Activated CD4-positive, alpha-beta T cell treated with anti-CD3 and anti-CD28 coated beads, Interleukin-2, amount 10 ng/mL, durations not matched to agents 24 days and 14 days (primary cell): ENCODE measurements at regions of chr7 and their contacts with region 1.

Region 1: GRCh38 chr7:18859318-18859717 is 258.1 kb downstream of the TWIST1 start:
- DNase-seq: peak; percentile 69
- H3K4me3 Mint-ChIP-seq: peak overlapping the region; percentile 9
- H3K27ac Mint-ChIP-seq: peak overlapping the region; percentile 86
- H3K4me1 Mint-ChIP-seq: peaks cover 20% of the 10 kb centered on the region
- H3K27me3 Mint-ChIP-seq: no peaks in the 10 kb centered on the region

Region 2: GRCh38 chr7:18844735-18845134 is 14.6 kb before region 1 on chr7:
- intact Hi-C with region 1: loop called (anchors 2 kb)
- DNase-seq: no peak
- H3K4me3 Mint-ChIP-seq: no peak overlapping the region
- H3K27ac Mint-ChIP-seq: no peak overlapping the region
- H3K4me1 Mint-ChIP-seq: no peaks in the 10 kb centered on the region
- H3K27me3 Mint-ChIP-seq: no peaks in the 10 kb centered on the region

Region 3: DNA sequence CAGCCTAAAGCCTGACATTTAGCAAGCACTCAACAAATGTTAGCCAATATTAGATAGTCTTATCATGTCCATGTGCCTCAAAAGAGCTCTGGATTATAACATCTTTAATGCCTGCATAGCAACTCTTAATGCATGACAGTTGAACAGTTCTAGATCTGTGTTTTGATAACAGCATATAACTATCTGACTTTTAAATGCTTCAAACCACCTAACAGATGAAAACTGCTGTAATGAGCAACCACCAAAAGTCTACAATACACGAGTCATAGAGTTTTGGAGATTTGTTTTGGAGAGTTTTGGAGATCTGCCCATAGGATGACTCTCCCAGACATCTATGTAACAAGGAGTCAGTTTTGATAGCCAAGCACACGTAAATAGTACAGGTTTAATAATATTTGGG is 30.8 kb after region 1 on chr7:
- intact Hi-C with region 1: no loop called
- DNase-seq: no peak
- H3K4me3 Mint-ChIP-seq: no peak overlapping the region
- H3K27ac Mint-ChIP-seq: no peak overlapping the region
- H3K4me1 Mint-ChIP-seq: no peaks in the 10 kb centered on the region
- H3K27me3 Mint-ChIP-seq: no peaks in the 10 kb centered on the region

Region 4: DNA sequence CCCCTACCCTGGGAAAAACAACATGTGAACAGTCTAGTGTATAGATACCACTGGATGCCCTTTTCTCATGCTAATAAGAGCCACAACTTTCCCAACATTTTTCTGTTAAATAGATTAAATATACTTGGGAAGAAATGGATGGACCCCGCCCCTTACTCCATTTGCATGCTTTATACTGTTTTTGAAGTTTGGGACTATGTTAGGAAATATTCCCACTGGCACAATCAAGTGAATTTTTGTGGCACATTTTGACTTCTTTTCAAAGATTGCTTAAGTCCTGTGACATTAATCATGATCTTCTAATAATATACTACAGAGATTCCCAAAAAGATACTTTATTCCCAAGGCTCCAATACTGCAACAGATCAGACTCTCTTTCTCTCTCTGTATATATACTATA is 41.5 kb after region 1 on chr7:
- intact Hi-C with region 1: no loop called
- DNase-seq: no peak
- H3K4me3 Mint-ChIP-seq: no peak overlapping the region
- H3K27ac Mint-ChIP-seq: no peak overlapping the region
- H3K4me1 Mint-ChIP-seq: no peaks in the 10 kb centered on the region
- H3K27me3 Mint-ChIP-seq: no peaks in the 10 kb centered on the region